OCI-LY7 (cell line): ENCODE measurements at regions of chr3 and their contacts with region 1.

Region 1: GRCh38 chr3:71563827-71564226 is 19.7 kb downstream of the FOXP1 start:
- DNase-seq: peak; percentile 94
- H3K4me3 ChIP-seq: peak overlapping the region; percentile 60
- H3K27ac ChIP-seq: peak overlapping the region; percentile 98
- H3K4me1 ChIP-seq: peaks cover 82% of the 10 kb centered on the region
- CTCF ChIP-seq: no peak

Region 2: GRCh38 chr3:71542521-71543370 is 21.1 kb before region 1 on chr3:
- CTCF ChIA-PET with region 1: interaction called, 4 read pairs
- POLR2A ChIA-PET with region 1: interaction called, 9 read pairs
- intact Hi-C with region 1: loop called (anchors 1 kb)
- DNase-seq: peak; percentile 90
- H3K4me3 ChIP-seq: peak overlapping the region; percentile 56
- H3K27ac ChIP-seq: peak overlapping the region; percentile 85
- H3K4me1 ChIP-seq: peaks cover 80% of the 10 kb centered on the region
- CTCF ChIP-seq: no peak

Region 3: DNA sequence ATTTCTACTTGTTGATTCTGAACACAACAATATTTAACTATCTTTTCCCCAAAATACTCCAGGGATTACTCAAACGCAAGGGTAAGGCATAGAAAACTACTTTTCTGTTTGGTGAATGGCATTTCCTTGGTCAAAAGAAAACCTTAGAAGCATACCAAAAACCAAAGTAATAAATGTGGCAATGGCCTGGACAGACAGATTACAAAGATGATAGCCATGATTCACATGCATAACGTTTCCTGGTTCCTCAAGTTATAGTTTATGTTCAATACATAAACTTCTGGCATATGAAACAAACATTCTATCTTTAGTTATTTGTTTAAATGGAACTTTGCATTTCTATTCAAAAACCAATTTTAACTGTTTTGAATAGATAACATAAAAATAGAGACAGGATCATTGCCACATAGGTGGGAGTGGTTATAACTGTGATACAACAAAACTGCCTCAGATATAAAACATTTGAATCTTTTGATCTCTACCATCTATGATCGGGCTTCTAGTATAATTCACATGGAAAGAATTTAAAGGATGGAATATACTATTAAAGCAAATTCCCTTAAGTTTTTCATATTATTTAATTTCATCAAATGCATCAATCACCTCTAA is 12.4 kb before region 1 on chr3:
- CTCF ChIA-PET with region 1: no interaction called
- POLR2A ChIA-PET with region 1: interaction called, 21 read pairs
- intact Hi-C with region 1: no loop called
- DNase-seq: no peak
- H3K4me3 ChIP-seq: no peak overlapping the region
- H3K27ac ChIP-seq: no peak overlapping the region
- H3K4me1 ChIP-seq: peaks cover 78% of the 10 kb centered on the region
- CTCF ChIP-seq: no peak

Region 4: DNA sequence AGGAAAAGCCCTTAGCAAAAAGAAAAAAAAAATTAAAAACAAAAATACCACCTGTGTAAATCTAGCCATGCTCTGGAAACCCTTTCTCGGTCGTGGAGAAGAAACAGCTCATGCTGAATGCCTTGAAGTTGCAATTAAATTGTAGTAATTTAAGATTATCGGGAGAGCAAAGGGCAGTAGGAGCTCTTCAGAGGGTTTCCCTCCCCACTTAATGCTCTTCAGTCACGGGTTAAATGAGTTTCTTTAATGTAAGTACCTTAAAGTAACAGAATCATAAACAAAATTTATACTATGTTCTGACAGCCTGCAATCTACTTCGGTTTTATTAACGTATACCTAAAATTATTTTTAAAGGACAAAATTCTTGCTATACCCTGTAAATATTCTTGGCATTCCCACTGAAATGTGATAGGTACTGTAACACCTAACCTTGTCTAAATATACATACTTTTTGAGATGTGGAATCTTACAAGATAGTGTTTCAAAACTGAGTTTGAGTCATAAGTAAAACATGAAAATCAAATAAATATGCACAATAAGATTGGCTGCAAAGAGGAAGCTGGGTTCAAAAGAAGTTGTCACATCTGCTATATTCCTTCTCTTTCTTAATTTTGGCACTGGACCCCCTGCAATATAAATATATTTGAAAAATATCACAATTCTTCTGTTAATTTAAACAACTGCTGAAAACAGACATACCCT is 14.4 kb after region 1 on chr3:
- CTCF ChIA-PET with region 1: no interaction called
- POLR2A ChIA-PET with region 1: interaction called, 55 read pairs
- intact Hi-C with region 1: loop called (anchors 1 kb)
- DNase-seq: no peak
- H3K4me3 ChIP-seq: peak overlapping the region; percentile 90
- H3K27ac ChIP-seq: peak overlapping the region; percentile 88
- H3K4me1 ChIP-seq: peaks cover 43% of the 10 kb centered on the region
- CTCF ChIP-seq: no peak